Colonic mucosa (tissue), 4 donors: ENCODE measurements at regions of chr4 and their contacts with region 1.

Region 1: GRCh38 chr4:83284193-83285054 is at the start of gene COQ2:
- DNase-seq: peak; percentile 98
- H3K4me3 ChIP-seq: peak within 1 kb of the TSS; percentile 59
- H3K27ac ChIP-seq: peak within 1 kb of the TSS; percentile 88
- H3K4me1 ChIP-seq: peaks cover 9% of the 10 kb centered on the region
- H3K27me3 ChIP-seq: no peaks in the 10 kb centered on the region
- CTCF ChIP-seq: peak; percentile 18
- total RNA-seq, gene COQ2: 23.4 to 28.3 TPM

Region 2: DNA sequence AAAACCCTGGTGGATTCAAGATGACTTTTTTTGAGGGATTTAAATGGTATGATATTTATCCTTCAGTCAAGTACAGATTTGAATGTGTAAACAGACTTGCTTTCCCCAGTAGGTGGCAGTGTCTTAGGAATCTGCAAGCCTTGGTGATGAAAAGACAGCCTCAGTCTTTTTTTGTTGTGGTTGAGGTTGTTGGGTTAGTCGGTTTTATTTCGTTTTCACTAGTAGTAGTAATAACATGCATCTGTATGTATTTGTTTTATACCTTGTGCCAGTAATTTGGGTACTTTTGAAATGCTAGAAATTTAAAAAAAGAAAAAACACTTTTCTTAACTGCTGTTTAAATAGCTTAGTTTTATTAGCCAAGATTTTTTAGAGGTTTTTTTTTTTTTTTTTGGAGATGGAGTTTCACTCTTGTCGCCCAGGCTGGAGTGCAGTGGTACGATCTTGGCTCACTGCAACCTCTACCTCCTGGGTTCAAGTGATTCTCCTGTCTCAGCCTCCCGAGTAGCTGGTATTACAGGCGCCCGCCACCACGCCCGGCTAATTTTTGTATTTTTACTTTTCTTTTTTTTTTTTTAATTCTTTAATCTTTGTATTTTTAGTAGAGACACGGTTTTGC is 210.2 kb before region 1 on chr4:
- intact Hi-C with region 1: loop called (anchors 5 kb)
- DNase-seq: peak; percentile 66
- H3K4me3 ChIP-seq: no peak overlapping the region
- H3K27ac ChIP-seq: no peak overlapping the region
- H3K4me1 ChIP-seq: no peaks in the 10 kb centered on the region
- H3K27me3 ChIP-seq: no peaks in the 10 kb centered on the region
- CTCF ChIP-seq: peak; percentile 71

Region 3: GRCh38 chr4:83114576-83114975 is 169.8 kb before region 1 on chr4 and contains the start of gene PLAC8:
- intact Hi-C with region 1: no loop called
- DNase-seq: peak; percentile 77
- H3K4me3 ChIP-seq: peak within 1 kb of the TSS; percentile 37
- H3K27ac ChIP-seq: peak within 1 kb of the TSS; percentile 90
- H3K4me1 ChIP-seq: peaks cover 4% of the 10 kb centered on the region
- H3K27me3 ChIP-seq: no peaks in the 10 kb centered on the region
- CTCF ChIP-seq: no peak
- total RNA-seq, gene PLAC8: 246 to 715 TPM

Region 4: DNA sequence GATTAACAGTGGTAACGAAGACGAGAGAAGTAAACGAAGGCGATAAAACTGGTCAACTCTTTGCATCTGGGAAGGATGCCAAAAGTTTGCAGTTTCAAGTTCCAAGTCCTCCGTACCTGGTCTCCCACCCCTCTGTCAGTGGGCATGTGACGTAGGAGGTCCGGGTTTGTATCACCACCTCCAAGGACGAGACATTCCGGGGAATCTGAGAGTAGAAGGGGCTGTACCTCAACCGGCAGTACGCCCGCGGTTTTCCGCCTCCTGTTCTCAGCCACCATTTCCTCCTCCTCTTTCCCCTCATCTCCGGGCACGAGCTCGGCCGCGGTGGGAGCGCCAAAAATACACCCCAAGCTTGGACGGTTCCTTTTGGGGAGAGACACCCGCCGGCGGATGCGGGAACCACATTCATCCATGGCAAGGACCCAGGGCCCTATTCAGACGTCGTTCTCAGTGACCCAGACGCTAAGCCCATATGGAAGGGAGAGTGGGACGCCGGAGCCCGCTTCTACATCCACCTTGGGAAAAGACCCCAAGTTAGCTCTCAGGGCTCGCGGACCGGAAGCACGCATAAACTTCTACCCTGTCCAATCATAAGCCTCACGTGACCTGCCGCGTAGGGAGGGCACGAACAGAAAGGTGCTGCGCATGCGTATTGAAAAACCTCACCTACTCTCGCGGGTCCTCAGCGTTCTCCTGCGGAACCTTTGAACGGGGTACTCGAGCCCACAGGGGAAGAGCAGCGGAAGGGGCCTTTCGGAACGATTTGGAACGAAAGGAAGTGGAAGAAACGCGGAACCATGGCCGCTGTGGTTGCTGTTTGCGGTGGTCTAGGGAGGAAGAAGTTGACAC is 171.1 kb after region 1 on chr4 and contains the starts of genes HELQ and MRPS18C:
- intact Hi-C with region 1: loop called (anchors 10 kb)
- DNase-seq: peak; percentile 98
- H3K4me3 ChIP-seq: peak within 1 kb of the TSS; percentile 66
- H3K27ac ChIP-seq: peak within 1 kb of the TSS; percentile 89
- H3K4me1 ChIP-seq: peaks cover 4% of the 10 kb centered on the region
- H3K27me3 ChIP-seq: no peaks in the 10 kb centered on the region
- CTCF ChIP-seq: no peak
- total RNA-seq, gene HELQ: 11.0 to 11.7 TPM
- total RNA-seq, gene MRPS18C: 38.2 to 57.6 TPM